Activated B cell treated with CpG ODN at 0.5 μM for 24 hours (primary cell): ENCODE measurements at regions of chr21 and their contacts with region 1.

Region 1: GRCh38 chr21:29073222-29074006 is at the start of gene CCT8:
- DNase-seq: peak; percentile 93
- ATAC-seq: peak; percentile 90
- H3K4me3 Mint-ChIP-seq: peak within 1 kb of the TSS; percentile 98
- H3K27ac Mint-ChIP-seq: peak within 1 kb of the TSS; percentile 98
- H3K4me1 Mint-ChIP-seq: peaks cover 55% of the 10 kb centered on the region
- H3K27me3 Mint-ChIP-seq: no peaks in the 10 kb centered on the region
- CTCF ChIP-seq: no peak
- total RNA-seq, gene CCT8: 170 and 179 TPM in 2 replicates

Region 2: GRCh38 chr21:28359300-28359699 is 714.1 kb before region 1 on chr21:
- CTCF ChIA-PET with region 1: no interaction called
- POLR2A ChIA-PET with region 1: no interaction called
- intact Hi-C with region 1: no loop called
- DNase-seq: no peak
- ATAC-seq: no peak
- H3K4me3 Mint-ChIP-seq: no peak overlapping the region
- H3K27ac Mint-ChIP-seq: no peak overlapping the region
- H3K4me1 Mint-ChIP-seq: no peaks in the 10 kb centered on the region
- H3K27me3 Mint-ChIP-seq: no peaks in the 10 kb centered on the region
- CTCF ChIP-seq: no peak

Region 3: GRCh38 chr21:28771790-28772501 is 301.5 kb before region 1 on chr21:
- CTCF ChIA-PET with region 1: no interaction called
- POLR2A ChIA-PET with region 1: no interaction called
- intact Hi-C with region 1: no loop called
- DNase-seq: no peak
- ATAC-seq: no peak
- H3K4me3 Mint-ChIP-seq: no peak overlapping the region
- H3K27ac Mint-ChIP-seq: no peak overlapping the region
- H3K4me1 Mint-ChIP-seq: no peaks in the 10 kb centered on the region
- H3K27me3 Mint-ChIP-seq: no peaks in the 10 kb centered on the region
- CTCF ChIP-seq: no peak

Region 4: DNA sequence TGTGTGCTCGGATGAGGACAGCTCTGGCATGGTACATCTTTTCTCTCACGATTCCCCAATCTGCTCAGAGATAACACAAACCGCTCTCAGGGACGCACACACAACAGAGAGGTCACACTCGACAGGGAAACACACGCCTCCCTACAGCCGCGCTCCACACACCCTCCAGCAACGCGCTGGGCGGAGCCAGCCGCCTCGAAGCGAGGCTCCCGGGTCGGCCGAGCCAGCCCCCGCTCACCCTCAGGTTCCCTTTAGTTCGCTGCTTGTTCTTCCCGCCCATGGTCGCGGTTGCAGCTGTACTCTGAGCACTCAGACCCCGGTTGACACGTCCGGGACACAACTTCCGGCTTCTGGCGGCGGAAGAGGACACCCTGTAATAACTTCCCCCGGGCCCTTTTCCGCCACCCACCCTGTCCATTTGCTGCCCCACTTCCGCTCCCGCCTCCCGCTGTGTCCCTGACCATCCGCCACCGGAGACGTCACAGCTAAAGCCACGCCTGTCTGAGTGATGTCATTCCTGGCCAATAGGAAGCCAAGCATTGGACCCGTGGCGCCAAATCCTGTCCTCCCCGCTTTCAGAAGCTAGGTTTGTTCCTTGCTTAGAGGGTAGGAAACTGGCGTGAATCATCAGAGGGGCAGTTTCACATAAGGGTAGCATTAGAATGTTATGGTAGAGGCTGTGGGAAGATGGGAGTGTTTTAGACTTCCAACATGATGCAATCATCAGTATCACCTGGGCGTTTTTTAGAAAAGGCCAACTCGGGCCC is 80.7 kb before region 1 on chr21 and contains the start of gene LTN1:
- CTCF ChIA-PET with region 1: no interaction called
- POLR2A ChIA-PET with region 1: interaction called, 20 read pairs
- intact Hi-C with region 1: loop called (anchors 1 kb)
- DNase-seq: peak; percentile 95
- ATAC-seq: peak; percentile 95
- H3K4me3 Mint-ChIP-seq: peak within 1 kb of the TSS; percentile 96
- H3K27ac Mint-ChIP-seq: peak within 1 kb of the TSS; percentile 94
- H3K4me1 Mint-ChIP-seq: peaks cover 39% of the 10 kb centered on the region
- H3K27me3 Mint-ChIP-seq: no peaks in the 10 kb centered on the region
- CTCF ChIP-seq: no peak
- total RNA-seq, gene LTN1: 22.5 and 25.8 TPM in 2 replicates

Region 5: DNA sequence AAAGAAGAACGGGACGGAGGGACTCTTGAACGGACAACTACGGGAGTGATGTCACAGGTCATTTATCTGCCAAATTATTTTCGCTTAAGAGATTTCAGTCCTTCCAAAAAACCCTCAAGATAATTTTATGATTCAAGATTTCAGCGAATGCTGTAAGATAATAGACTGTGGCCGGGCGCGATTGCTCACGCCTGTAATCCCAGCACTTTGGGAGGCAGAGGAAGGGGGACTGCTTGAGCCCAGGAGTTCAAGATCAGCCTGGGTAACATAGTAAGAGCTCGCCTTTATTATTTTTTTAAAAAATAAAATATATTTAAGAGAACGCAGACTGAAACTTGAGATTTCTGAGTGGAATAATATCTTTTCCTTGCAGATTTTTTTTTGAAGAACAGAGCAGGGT is 54.9 kb before region 1 on chr21:
- CTCF ChIA-PET with region 1: no interaction called
- POLR2A ChIA-PET with region 1: interaction called, 47 read pairs
- intact Hi-C with region 1: loop called (anchors 1 kb)
- DNase-seq: no peak
- ATAC-seq: peak; percentile 17
- H3K4me3 Mint-ChIP-seq: peak overlapping the region; percentile 92
- H3K27ac Mint-ChIP-seq: peak overlapping the region; percentile 94
- H3K4me1 Mint-ChIP-seq: peaks cover 29% of the 10 kb centered on the region
- H3K27me3 Mint-ChIP-seq: no peaks in the 10 kb centered on the region
- CTCF ChIP-seq: no peak

Region 6: DNA sequence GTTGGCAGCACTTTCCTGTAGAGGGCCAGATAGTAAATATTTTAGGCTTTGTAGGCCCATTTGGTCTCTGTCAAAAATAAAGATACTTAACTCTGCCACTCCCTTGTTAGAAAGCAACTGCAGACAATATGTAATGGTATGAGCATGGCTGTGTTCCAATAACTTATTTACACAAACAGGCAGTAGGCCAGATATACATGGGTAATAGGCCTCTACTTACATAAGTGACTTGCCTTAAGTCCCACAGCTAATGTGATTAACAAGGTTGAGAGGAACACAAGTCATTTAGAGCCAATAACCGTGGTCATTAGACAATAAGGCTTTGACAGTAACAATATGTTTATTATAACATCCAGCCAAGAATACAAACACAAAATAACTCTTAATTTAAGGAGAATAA is 17.4 kb before region 1 on chr21:
- CTCF ChIA-PET with region 1: no interaction called
- POLR2A ChIA-PET with region 1: interaction called, 6 read pairs
- intact Hi-C with region 1: loop called (anchors 2 kb)
- DNase-seq: no peak
- ATAC-seq: no peak
- H3K4me3 Mint-ChIP-seq: no peak overlapping the region
- H3K27ac Mint-ChIP-seq: no peak overlapping the region
- H3K4me1 Mint-ChIP-seq: no peaks in the 10 kb centered on the region
- H3K27me3 Mint-ChIP-seq: no peaks in the 10 kb centered on the region
- CTCF ChIP-seq: no peak

Region 7: DNA sequence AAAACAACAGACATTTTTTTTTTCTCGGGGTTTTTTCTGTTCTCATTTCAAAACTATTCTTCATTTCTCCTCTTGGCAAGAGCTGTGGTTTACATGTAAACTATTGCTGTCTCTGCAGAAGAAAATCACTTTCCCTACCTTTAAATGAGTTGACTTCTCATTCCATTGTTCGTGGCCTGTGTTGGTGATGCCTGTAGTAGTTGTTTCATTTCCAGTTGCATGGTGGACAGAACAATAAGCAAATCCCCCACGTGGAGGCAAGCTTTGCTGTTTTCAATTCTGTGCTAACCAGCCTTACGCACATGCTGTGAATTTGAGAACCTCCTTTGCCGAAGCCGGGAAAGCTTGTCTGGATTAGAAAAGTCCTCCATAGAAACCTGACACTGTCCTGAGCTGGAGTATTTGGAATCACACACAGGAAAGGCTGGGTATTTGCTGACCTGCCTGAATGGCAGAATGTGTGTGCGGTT is 30.9 kb after region 1 on chr21:
- CTCF ChIA-PET with region 1: no interaction called
- POLR2A ChIA-PET with region 1: interaction called, 5 read pairs
- intact Hi-C with region 1: loop called (anchors 1 kb)
- DNase-seq: no peak
- ATAC-seq: no peak
- H3K4me3 Mint-ChIP-seq: no peak overlapping the region
- H3K27ac Mint-ChIP-seq: no peak overlapping the region
- H3K4me1 Mint-ChIP-seq: peaks cover 11% of the 10 kb centered on the region
- H3K27me3 Mint-ChIP-seq: no peaks in the 10 kb centered on the region
- CTCF ChIP-seq: no peak

Region 8: DNA sequence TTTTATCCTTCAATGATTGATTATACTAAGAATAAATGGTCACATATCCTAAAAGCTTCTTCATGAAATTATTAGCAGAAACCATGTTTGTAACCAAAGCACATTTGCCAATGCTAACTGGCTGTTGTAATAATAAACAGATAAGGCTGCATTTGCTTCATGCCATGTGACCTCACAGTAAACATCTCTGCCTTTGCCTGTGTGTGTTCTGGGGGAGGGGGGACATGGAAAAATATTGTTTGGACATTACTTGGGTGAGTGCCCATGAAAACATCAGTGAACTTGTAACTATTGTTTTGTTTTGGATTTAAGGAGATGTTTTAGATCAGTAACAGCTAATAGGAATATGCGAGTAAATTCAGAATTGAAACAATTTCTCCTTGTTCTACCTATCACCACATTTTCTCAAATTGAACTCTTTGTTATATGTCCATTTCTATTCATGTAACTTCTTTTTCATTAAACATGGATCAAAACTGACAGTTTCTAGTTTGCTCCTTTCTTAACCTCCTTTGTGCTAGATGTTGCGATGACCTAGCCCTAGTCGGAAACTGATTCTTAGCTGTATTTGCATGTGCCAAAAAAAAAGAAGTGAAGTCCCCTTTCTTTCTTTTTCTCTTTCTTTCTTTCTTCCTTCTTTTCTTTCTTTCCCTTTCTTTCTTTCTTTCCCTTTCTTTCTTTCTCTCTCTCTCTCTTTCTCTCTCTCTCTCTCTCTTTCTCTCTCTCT is 102.2 kb after region 1 on chr21:
- CTCF ChIA-PET with region 1: no interaction called
- POLR2A ChIA-PET with region 1: interaction called, 15 read pairs
- intact Hi-C with region 1: no loop called
- DNase-seq: no peak
- ATAC-seq: no peak
- H3K4me3 Mint-ChIP-seq: peak overlapping the region; percentile 52
- H3K27ac Mint-ChIP-seq: peak overlapping the region; percentile 24
- H3K4me1 Mint-ChIP-seq: peaks cover 27% of the 10 kb centered on the region
- H3K27me3 Mint-ChIP-seq: no peaks in the 10 kb centered on the region
- CTCF ChIP-seq: no peak

Region 9: GRCh38 chr21:29763674-29764073 is 690.3 kb after region 1 on chr21:
- CTCF ChIA-PET with region 1: no interaction called
- POLR2A ChIA-PET with region 1: no interaction called
- intact Hi-C with region 1: no loop called
- DNase-seq: no peak
- ATAC-seq: no peak
- H3K4me3 Mint-ChIP-seq: no peak overlapping the region
- H3K27ac Mint-ChIP-seq: no peak overlapping the region
- H3K4me1 Mint-ChIP-seq: no peaks in the 10 kb centered on the region
- H3K27me3 Mint-ChIP-seq: no peaks in the 10 kb centered on the region
- CTCF ChIP-seq: no peak